GM12878 (cell line): ENCODE measurements at regions of chr1 and their contacts with region 1.

Region 1: DNA sequence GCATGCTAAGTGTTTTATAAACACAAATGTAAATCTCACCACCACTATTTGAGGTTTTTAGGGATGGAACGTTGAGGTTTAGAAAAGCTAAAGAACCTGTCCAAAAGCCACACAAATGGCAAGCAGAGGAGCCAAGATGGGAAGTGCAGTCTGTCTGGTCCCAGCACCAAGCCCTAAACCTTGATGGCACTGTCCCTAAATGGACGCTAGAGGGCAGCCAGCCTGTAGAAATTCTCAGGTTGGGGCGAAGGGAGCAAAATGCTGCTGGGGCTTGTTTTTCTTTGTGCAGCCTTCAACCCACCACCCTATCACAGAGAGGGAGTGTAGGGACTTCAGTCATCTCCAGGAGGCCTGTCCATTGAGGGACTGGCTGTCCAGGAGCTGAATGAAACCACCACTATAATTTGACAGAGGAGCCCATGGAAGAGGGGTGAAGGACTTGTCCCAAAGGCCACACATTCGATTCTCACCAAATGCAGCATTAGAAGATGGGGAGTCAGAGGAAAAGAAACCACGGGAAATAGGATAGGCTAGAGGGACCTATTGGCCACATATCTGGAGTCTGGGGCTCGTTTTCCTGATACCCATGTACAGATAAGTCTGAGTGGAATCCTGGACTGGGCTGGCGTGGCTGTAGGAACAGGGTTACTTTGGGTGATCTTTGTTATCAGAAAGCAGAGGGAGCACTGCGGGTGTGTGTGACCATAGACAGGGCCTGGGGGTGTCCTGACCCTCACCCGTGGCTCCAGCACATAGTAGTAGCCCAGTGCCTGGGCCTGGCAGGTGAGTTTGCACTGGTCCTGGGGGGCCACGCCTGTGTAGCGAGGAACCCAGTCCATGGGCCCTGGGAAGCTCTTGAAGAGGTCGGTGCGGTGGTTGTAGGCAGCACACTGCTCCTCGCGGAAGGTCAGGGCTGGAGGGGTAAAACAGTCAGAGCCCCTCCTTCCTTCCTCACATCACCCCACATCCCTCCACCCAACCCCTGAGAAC is 6.1 kb downstream of the ADAMTS4 start:
- DNase-seq: no peak
- ATAC-seq: peak; percentile 94
- H3K4me3 ChIP-seq: no peak overlapping the region
- H3K27ac ChIP-seq: no peak overlapping the region
- H3K4me1 ChIP-seq: peaks cover 19% of the 10 kb centered on the region
- H3K27me3 ChIP-seq: no peaks in the 10 kb centered on the region
- CTCF ChIP-seq: peak; percentile 89 to 95 (median 89)
- EP300 ChIP-seq: no peak
- POLR2A ChIP-seq: no peak
- RAD21 ChIP-seq: peak; percentile 84

Region 2: GRCh38 chr1:160942926-160943325 is 249.8 kb before region 1 on chr1:
- CTCF ChIA-PET with region 1: no interaction called
- POLR2A ChIA-PET with region 1: no interaction called
- RAD21 ChIA-PET with region 1: no interaction called
- SMC1A ChIA-PET with region 1: no interaction called
- in situ Hi-C with region 1: no loop called
- intact Hi-C with region 1: no loop called
- DNase-seq: no peak
- ATAC-seq: peak; percentile 58; the same call in 2 of the 3 replicates
- H3K4me3 ChIP-seq: no peak overlapping the region
- H3K27ac ChIP-seq: no peak overlapping the region
- H3K4me1 ChIP-seq: no peaks in the 10 kb centered on the region
- H3K27me3 ChIP-seq: no peaks in the 10 kb centered on the region
- CTCF ChIP-seq: peak; percentile 8 to 53 (median 25); a peak in 4 of 6 replicates
- EP300 ChIP-seq: no peak
- POLR2A ChIP-seq: no peak
- RAD21 ChIP-seq: peak; percentile 25; the same call in 1 of the 2 replicates

Region 3: GRCh38 chr1:161209790-161210409 is 17.1 kb after region 1 on chr1:
- CTCF ChIA-PET with region 1: interaction called, 31 read pairs
- POLR2A ChIA-PET with region 1: interaction called, 4 read pairs
- RAD21 ChIA-PET with region 1: interaction called, 4 read pairs
- SMC1A ChIA-PET with region 1: interaction called, 55 read pairs
- in situ Hi-C with region 1: no loop called
- intact Hi-C with region 1: no loop called
- DNase-seq: no peak
- ATAC-seq: peak; percentile 99
- H3K4me3 ChIP-seq: no peak overlapping the region
- H3K27ac ChIP-seq: no peak overlapping the region
- H3K4me1 ChIP-seq: no peaks in the 10 kb centered on the region
- H3K27me3 ChIP-seq: no peaks in the 10 kb centered on the region
- CTCF ChIP-seq: peak; percentile 88 to 94 (median 89)
- EP300 ChIP-seq: no peak
- POLR2A ChIP-seq: no peak
- RAD21 ChIP-seq: peak; percentile 93

Region 4: GRCh38 chr1:161267321-161267720 is 74.5 kb after region 1 on chr1:
- CTCF ChIA-PET with region 1: no interaction called
- POLR2A ChIA-PET with region 1: no interaction called
- RAD21 ChIA-PET with region 1: no interaction called
- SMC1A ChIA-PET with region 1: no interaction called
- in situ Hi-C with region 1: no loop called
- intact Hi-C with region 1: no loop called
- DNase-seq: no peak
- ATAC-seq: no peak
- H3K4me3 ChIP-seq: no peak overlapping the region
- H3K27ac ChIP-seq: no peak overlapping the region
- H3K4me1 ChIP-seq: no peaks in the 10 kb centered on the region
- H3K27me3 ChIP-seq: no peaks in the 10 kb centered on the region
- CTCF ChIP-seq: no peak
- EP300 ChIP-seq: no peak
- POLR2A ChIP-seq: no peak
- RAD21 ChIP-seq: no peak

Region 5: DNA sequence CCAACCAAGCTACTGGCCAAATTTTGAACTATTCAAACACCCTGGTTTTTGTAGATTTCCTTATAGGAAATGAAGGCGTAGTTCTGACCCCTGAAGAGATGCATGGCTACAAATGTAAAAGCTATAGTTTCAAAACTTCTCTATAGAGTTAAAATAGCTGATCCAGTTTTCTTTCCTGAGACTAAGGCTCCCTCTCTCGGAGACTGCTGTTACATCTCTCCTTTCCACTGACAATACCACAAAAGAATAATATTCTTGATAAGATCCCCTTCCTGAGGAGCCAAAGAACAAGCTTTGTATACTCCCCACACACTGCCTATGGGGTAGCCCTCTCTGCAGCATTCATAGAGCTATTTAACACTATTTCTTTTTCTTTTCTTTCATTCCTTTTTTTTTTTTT is 181.6 kb after region 1 on chr1:
- CTCF ChIA-PET with region 1: interaction called, 113 read pairs
- POLR2A ChIA-PET with region 1: no interaction called
- RAD21 ChIA-PET with region 1: interaction called, 3 read pairs
- SMC1A ChIA-PET with region 1: interaction called, 5 read pairs
- in situ Hi-C with region 1: no loop called
- intact Hi-C with region 1: no loop called
- DNase-seq: no peak
- ATAC-seq: no peak
- H3K4me3 ChIP-seq: no peak overlapping the region
- H3K27ac ChIP-seq: no peak overlapping the region
- H3K4me1 ChIP-seq: no peaks in the 10 kb centered on the region
- H3K27me3 ChIP-seq: no peaks in the 10 kb centered on the region
- CTCF ChIP-seq: peak in 1 of 3 experiments; percentile 28; a peak in 2 of 6 replicates
- EP300 ChIP-seq: no peak
- POLR2A ChIP-seq: no peak
- RAD21 ChIP-seq: peak; percentile 36; the same call in 1 of the 2 replicates

Region 6: DNA sequence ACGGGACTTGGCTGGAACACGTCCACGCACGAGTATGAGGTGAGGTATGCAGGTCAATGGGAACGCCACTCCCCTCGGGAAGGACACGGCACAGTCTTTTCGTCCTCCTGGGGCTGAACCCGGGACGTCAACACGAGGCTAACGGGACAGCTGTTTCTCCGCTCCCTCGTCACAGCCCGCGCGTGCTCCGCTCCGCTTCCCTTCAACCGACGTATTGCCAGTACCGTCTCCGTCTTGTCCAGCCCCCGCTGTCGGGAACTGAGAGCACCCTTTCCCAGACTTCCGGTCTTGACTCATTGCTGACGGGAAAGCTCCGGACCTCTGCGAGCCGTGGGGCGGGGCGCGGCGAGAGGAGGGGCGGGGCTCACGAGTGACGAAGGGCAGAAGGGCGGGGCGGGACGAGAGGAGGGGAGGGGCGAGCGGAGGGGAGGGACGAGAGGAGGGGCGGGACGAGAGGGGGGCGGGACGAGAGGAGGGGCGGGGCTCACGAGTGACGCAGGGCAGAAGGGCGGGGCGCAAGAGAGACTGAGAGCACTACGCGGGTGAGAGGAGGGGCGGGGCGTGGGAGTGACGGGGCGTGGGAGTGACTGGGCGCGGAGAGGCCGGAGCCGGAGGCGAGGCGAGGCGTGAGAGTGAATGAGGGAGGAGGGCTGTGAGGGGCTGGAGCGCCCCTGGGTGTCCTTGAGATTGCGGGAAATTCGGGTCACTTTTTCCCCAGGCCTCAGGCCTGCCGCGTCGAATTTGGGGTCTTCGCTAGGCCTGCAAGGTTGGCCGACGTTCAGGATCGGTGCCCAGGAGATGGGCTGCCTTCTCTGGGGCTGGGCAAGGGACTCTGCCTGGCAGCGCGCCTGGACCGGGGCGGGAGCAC is 197.2 kb after region 1 on chr1:
- CTCF ChIA-PET with region 1: interaction called, 113 read pairs
- POLR2A ChIA-PET with region 1: no interaction called
- RAD21 ChIA-PET with region 1: no interaction called
- SMC1A ChIA-PET with region 1: interaction called, 6 read pairs
- in situ Hi-C with region 1: no loop called
- intact Hi-C with region 1: no loop called
- DNase-seq: peak; percentile 61
- ATAC-seq: peak; percentile 95
- H3K4me3 ChIP-seq: peak overlapping the region; percentile 87
- H3K27ac ChIP-seq: peak overlapping the region; percentile 71
- H3K4me1 ChIP-seq: peaks cover 12% of the 10 kb centered on the region; the same call in 1 of the 2 replicates
- H3K27me3 ChIP-seq: no peaks in the 10 kb centered on the region
- CTCF ChIP-seq: no peak
- EP300 ChIP-seq: 0 out of 4 replicates have a peak, but pooled peaks of 1 of the 2 experiments have one; percentile 37
- POLR2A ChIP-seq: peak; percentile 77
- RAD21 ChIP-seq: no peak